ENCODE measurements at regions of chr1 and their contacts with region 1.

Region 1: DNA sequence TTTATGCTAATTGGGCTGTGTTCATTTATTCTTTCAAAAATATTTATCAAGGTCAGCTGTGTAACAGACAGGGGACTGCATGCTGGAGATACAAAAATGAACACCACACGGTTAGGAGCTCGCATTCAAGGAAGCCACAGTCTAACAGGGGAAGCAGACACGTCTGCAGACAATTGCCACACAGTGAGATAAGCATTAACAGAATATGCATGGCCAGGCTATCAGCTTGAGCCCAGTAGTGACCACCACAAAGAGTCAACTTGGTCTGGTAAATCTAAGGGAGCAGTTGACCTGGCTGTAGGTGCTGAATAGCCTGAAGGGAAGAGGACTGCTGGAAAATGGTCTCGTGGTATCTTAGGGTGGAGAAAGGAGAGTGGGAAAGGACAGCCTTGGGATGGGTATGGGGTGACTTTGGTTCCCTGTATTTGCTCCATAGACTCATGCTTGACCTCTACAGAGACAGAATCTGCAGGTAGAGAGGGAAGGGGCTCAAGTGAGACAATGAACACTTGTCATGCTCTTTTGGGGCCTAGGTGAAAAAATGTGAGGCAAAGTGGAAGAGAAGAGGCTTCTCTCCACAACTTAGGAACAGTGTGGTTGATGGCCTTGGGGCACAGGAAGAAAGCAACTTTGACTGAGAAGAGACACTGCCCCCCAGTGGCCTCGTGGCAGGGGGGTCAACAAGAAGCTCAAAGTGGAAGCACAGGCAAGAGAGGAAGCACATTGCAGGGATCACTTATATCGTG is 7.6 kb upstream of the NPL start:
- DNase-seq: peak; percentile 91
- H3K4me3 Mint-ChIP-seq: no peak overlapping the region
- H3K27ac Mint-ChIP-seq: no peak overlapping the region
- H3K4me1 Mint-ChIP-seq: peaks cover 21% of the 10 kb centered on the region
- H3K27me3 Mint-ChIP-seq: peaks cover 3% of the 10 kb centered on the region

Region 2: GRCh38 chr1:182446033-182446669 is 335.9 kb before region 1 on chr1:
- intact Hi-C with region 1: loop called (anchors 1 kb)
- DNase-seq: peak; percentile 79
- H3K4me3 Mint-ChIP-seq: no peak overlapping the region
- H3K27ac Mint-ChIP-seq: no peak overlapping the region
- H3K4me1 Mint-ChIP-seq: peaks cover 5% of the 10 kb centered on the region
- H3K27me3 Mint-ChIP-seq: peaks cover 6% of the 10 kb centered on the region

Region 3: GRCh38 chr1:182595641-182596240 is 186.3 kb before region 1 on chr1:
- intact Hi-C with region 1: loop called (anchors 1 kb)
- DNase-seq: peak; percentile 90
- H3K4me3 Mint-ChIP-seq: no peak overlapping the region
- H3K27ac Mint-ChIP-seq: no peak overlapping the region
- H3K4me1 Mint-ChIP-seq: peaks cover 18% of the 10 kb centered on the region
- H3K27me3 Mint-ChIP-seq: peaks cover 17% of the 10 kb centered on the region

Region 4: GRCh38 chr1:182716740-182717720 is 65.0 kb before region 1 on chr1:
- intact Hi-C with region 1: loop called (anchors 5 kb)
- DNase-seq: no peak
- H3K4me3 Mint-ChIP-seq: no peak overlapping the region
- H3K27ac Mint-ChIP-seq: peak overlapping the region; percentile 22
- H3K4me1 Mint-ChIP-seq: peaks cover 42% of the 10 kb centered on the region
- H3K27me3 Mint-ChIP-seq: no peaks in the 10 kb centered on the region